ENCODE measurements at regions of chr9 and their contacts with region 1.

Region 1: DNA sequence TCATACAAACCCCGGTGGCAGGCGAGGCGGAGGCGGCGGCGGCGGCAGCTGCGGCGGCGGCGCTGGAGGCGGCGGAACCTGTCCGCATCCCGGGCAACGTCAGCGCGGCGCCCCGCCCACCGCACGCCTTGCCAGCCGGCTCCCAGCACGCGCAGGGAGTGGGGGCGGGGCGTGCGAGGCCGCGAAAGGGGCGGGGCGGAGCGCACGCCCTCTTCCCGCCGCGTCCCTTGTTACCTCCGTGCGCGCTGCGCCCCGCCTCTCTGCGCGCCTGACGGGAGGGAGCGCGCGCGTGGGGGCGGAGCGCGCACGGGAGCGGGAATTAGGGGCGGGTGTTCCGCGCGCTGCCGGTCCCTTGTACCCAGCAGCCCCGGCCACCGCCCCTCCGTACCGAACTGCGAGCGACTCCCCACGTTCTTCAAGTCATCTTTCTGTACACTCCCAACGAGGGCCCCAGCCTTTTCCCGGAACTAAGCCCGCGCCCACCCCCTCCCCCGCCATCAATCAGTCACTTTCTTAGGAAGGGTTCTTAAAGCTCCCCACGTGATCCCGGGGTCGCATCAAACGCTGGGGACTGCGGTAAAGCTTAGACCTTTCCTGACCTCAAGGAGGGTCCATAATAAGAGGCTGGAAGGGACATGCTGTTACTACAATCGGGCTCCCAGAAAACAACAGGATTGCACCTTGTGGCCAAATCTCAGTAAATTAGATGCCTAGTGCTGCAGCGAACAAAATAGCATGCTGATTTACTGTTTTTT is at the start of gene AGTPBP1:
- DNase-seq: peak; percentile 99
- H3K4me3 Mint-ChIP-seq: peak within 1 kb of the TSS; percentile 88
- H3K27ac Mint-ChIP-seq: peak within 1 kb of the TSS; percentile 94
- H3K4me1 Mint-ChIP-seq: peaks cover 25% of the 10 kb centered on the region
- H3K27me3 Mint-ChIP-seq: peaks cover 8% of the 10 kb centered on the region
- total RNA-seq, gene AGTPBP1: 25.8 and 27.8 TPM in 2 replicates

Region 2: DNA sequence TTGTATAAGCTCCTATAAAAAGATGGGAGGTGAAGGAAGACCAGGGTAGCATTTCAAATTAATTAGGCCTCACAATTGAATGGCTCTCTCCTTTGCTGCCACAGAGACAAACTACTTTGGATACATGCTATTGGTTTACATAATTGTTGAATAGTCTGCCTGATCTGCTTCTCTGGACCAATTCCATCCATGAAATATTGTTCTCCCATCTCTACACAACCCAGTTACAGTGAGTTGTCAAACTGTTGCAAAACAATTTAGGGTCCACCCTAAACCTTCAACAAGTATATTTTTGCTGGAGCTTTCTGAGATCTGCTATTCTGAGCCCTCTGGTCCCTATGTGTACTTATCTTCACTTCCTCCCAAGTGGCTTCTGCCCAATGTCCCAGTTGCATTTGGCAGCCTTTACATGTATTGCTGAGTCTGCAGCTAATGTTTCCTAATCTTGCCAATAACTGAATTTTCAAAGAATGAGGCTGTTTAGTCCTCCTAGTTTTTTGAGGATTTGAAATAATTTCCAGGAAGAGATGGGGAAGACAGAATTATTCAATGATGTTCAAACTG is 39.2 kb before region 1 on chr9:
- intact Hi-C with region 1: loop called (anchors 2 kb)
- DNase-seq: no peak
- H3K4me3 Mint-ChIP-seq: no peak overlapping the region
- H3K27ac Mint-ChIP-seq: no peak overlapping the region
- H3K4me1 Mint-ChIP-seq: peaks cover 3% of the 10 kb centered on the region
- H3K27me3 Mint-ChIP-seq: no peaks in the 10 kb centered on the region

Region 3: GRCh38 chr9:85940832-85941621 is 199.0 kb after region 1 on chr9 and contains the start of gene NAA35:
- intact Hi-C with region 1: loop called (anchors 1 kb)
- DNase-seq: peak; percentile 100
- H3K4me3 Mint-ChIP-seq: no peak within 1 kb of the TSS
- H3K27ac Mint-ChIP-seq: peak within 1 kb of the TSS; percentile 92
- H3K4me1 Mint-ChIP-seq: peaks cover 11% of the 10 kb centered on the region
- H3K27me3 Mint-ChIP-seq: no peaks in the 10 kb centered on the region
- total RNA-seq, gene NAA35: 28.0 and 29.6 TPM in 2 replicates